ENCODE measurements at regions of chr16 and their contacts with region 1.

Region 1: DNA sequence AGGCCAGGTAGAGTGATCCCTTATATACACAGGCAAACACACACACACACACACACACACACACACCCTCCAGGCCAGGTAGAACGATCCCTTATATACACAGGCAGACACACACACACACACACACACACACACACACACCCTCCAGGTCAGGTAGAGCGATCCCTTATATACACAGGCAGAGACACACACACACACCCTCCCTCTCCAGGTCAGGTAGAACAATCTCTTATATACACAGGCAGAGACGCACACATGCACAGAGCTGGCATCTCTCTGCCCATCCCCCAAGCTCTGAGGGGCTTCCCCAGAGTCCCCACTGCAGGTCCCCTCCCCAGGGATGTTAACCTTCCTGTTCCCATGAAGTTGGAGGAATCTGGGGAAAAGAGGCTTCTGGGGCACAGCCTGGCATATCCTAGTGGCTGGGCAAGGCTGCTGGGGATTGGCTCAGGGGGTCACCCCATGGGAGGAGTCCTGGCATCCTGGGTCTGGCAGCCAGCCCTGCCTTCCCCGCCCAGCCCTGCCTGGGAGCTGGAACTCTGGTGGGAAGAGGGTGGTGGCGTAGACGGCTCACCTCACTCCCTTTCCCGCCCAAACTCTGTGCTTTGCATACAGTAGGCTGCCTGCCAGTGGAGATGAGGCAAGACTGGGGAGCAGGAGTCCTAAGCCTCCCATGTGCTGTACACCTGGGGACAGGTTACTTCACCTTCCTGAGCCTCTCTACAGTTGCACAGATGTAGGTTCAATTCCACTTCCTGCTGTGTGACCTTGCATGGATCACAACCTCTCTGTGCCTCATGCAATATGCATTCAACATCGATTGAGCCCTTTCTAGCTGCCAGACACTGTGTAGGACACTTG is 41.8 kb downstream of the TEKT5 start:
- DNase-seq: peak; percentile 57

Region 2: GRCh38 chr16:10256784-10257641 is 395.9 kb before region 1 on chr16:
- intact Hi-C with region 1: no loop called
- DNase-seq: no peak

Region 3: DNA sequence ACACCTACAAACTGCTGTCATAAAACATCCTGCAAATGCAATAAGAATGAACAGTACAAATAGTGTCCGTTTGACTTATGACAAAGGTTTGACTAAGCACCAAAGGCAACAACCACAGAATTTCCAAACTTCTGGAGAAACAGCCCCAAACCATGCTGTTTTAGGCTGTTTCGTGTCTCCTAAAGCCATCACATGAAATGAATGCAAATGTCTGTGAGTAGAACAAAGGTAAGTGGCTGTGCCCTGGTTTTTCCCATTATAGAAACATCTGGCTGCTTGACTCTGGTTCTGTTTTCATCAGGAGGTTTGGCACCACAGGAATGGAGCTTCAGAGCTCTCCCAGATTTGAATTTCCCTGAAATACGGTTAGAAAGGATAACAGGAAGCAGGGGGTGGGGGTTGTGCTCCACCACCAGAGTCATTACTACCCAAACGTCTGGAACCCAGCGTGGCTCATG is 68.0 kb before region 1 on chr16:
- intact Hi-C with region 1: no loop called
- DNase-seq: no peak

Region 4: GRCh38 chr16:10616730-10617555 is 36.0 kb before region 1 on chr16:
- intact Hi-C with region 1: no loop called
- DNase-seq: no peak

Region 5: DNA sequence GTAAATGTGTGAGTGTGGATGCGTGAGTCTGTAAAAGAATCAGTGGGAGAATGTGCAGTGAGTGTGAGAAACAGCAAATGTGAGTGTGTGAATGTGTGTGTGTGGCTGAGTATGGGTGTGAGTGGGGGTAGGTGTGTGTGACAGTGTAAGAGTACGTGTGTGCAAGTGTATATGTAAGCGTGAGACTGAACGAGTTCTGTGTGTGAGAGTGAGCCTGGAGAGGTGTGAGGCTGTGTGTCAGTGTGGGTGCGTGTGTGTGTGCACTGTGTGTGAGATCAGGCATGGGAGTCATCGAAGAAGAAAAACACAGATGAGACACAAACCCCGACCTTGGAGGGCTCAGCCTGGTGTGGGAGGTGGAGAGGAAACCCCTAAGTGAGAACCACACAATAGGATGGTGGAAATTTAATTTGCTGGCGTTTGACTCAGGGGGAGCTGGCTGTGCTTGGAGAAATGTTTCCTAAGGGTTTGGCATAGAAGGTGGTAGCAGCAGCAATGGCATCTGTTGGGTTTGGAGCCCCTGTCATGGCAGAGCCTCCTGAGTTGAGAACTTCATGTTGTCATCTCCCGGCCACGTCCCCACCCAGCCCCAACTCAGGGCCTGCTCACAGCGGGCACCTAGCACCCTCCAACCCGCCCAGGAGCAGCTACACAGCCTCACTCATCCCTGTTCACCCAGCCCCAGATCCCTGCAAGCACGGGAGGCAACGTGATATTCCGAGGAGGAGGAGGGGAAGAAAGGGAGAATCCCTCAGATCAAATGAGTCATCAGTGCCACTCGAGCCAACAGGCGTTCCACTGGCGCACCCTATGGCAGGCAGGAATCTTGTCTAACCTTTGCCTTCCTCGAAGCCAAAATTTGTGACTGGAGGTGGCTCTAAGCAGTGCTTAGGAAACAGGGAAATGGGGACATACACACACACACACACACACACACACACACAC is 76.4 kb after region 1 on chr16:
- intact Hi-C with region 1: loop called in 1 of 2 experiments (anchors 2 kb)
- DNase-seq: peak; percentile 78